ENCODE measurements at regions of chr3 and their contacts with region 1.

Region 1: GRCh38 chr3:34683851-34684250 is 885.4 kb downstream of the PDCD6IP start:
- DNase-seq: peak; percentile 65 to 75
- H3K4me3 ChIP-seq: no peak overlapping the region
- H3K4me3 Mint-ChIP-seq: no peak overlapping the region
- H3K27ac Mint-ChIP-seq: no peak overlapping the region
- H3K4me1 ChIP-seq: peaks cover 8% of the 10 kb centered on the region
- H3K4me1 Mint-ChIP-seq: no peaks in the 10 kb centered on the region
- H3K27me3 ChIP-seq: no peaks in the 10 kb centered on the region
- H3K27me3 Mint-ChIP-seq: no peaks in the 10 kb centered on the region
- CTCF ChIP-seq: peak; percentile 66 to 76

Region 2: DNA sequence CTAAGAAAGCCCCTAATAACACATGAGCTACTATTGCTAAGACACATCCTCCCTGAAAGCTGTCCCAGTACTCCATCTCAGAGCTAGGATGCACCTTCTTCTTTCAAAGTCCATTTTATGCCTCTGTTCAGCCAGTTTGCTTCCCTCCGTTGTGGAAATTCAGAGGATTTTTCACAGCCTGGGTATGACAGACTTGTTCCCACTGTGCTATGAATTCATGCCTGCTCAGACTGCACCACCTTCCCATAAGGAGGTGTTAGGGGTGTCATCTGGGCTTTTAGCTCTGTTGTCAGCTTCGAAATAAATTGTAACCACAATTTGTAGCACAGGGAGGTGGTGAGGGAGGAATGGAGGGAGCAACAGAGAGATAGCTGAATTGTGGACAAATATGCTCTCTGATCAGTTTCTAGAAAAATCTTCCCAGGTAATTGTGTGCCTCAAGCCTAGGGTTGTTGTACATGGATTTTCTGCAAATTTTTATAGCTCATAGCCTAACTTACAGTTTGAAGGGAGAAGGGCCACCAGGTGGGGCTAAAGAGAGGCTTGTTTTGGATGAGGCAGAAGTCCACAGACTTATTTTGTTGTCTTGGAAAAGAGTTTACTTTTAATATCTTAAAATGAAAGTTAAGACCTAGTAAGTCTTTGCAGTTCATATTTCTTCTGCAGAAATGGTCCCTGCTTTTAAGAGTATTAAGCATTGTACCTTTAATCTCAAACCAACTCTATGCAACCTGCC is 423.4 kb before region 1 on chr3:
- CTCF ChIA-PET with region 1: interaction called, 46 read pairs
- POLR2A ChIA-PET with region 1: no interaction called
- intact Hi-C with region 1: loop called (anchors 1 kb)
- DNase-seq: peak; percentile 45 to 63
- H3K4me3 ChIP-seq: no peak overlapping the region
- H3K4me3 Mint-ChIP-seq: no peak overlapping the region
- H3K27ac Mint-ChIP-seq: no peak overlapping the region
- H3K4me1 ChIP-seq: no peaks in the 10 kb centered on the region
- H3K4me1 Mint-ChIP-seq: peaks cover 7% of the 10 kb centered on the region
- H3K27me3 ChIP-seq: no peaks in the 10 kb centered on the region
- H3K27me3 Mint-ChIP-seq: peaks cover 4% of the 10 kb centered on the region
- CTCF ChIP-seq: peak; percentile 51 to 74

Region 3: DNA sequence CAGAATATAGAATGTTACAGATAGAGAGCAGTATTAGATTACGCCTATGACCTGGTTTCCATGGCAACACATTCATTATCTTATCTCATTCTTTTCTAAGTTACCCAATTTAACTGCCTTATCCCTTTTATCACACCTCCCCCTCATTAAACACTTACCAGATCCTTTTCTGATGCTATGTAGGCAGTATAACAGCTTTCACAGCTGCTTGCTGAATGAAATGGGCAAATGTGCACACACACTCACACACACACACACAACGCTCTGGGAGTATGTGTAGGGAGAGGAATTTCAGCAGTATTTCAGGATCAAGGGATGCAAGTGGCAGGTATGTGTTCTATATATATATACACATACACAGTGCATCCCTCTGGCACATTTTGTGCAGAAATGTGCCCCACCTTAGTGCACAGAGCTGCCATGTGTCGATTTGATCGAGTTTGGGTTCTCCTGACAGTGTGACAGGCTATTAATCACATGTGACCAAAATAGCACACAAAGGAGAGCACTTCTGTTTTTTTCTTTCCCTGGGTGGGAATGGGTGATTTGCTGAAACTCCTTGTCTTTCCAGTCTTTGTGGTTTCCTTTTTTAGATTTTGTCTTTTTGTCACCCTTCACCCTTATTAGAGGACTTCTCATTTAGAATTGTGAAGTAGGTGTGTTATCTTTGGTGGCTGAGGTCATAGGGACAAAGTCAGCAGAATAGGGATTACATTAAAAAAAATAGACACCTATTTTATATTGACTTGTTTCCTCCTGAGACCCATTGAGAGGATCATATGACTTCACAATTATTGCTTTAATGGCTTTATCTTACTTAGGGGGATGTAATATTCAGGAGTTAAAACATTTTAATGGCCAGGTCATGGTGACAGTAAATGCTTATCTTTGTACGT is 331.7 kb before region 1 on chr3:
- CTCF ChIA-PET with region 1: no interaction called
- POLR2A ChIA-PET with region 1: no interaction called
- intact Hi-C with region 1: loop called (anchors 10 kb)
- DNase-seq: peak in 1 of 2 experiments; percentile 20
- H3K4me3 ChIP-seq: no peak overlapping the region
- H3K4me3 Mint-ChIP-seq: no peak overlapping the region
- H3K27ac Mint-ChIP-seq: peak overlapping the region; percentile 4
- H3K4me1 ChIP-seq: peaks cover 21% of the 10 kb centered on the region
- H3K4me1 Mint-ChIP-seq: peaks cover 20% of the 10 kb centered on the region
- H3K27me3 ChIP-seq: no peaks in the 10 kb centered on the region
- H3K27me3 Mint-ChIP-seq: no peaks in the 10 kb centered on the region
- CTCF ChIP-seq: no peak

Region 4: DNA sequence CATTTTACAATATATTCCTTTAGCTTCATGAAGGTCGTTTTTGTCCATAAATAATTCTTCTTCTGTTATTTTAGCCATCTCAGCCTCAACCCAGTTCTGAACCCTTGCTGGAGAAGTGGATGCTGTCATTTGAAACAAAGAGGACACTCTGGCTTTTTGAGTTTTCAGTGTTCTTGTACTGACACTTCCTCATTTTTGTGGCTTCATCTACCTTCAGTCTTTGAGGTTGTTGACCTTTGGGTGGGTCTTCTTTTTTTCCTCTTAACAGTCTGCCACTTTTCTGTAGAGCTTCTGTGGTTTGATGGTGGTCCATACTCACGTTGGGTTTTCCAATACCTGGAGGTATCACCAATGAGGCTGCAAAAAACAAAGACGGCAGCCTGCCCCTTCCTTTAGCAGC is 234.5 kb before region 1 on chr3:
- CTCF ChIA-PET with region 1: no interaction called
- POLR2A ChIA-PET with region 1: no interaction called
- intact Hi-C with region 1: no loop called
- DNase-seq: no peak
- H3K4me3 ChIP-seq: no peak overlapping the region
- H3K4me3 Mint-ChIP-seq: no peak overlapping the region
- H3K27ac Mint-ChIP-seq: no peak overlapping the region
- H3K4me1 ChIP-seq: no peaks in the 10 kb centered on the region
- H3K4me1 Mint-ChIP-seq: no peaks in the 10 kb centered on the region
- H3K27me3 ChIP-seq: no peaks in the 10 kb centered on the region
- H3K27me3 Mint-ChIP-seq: no peaks in the 10 kb centered on the region
- CTCF ChIP-seq: no peak

Region 5: GRCh38 chr3:34619990-34620389 is 63.9 kb before region 1 on chr3:
- CTCF ChIA-PET with region 1: interaction called, 11 read pairs
- POLR2A ChIA-PET with region 1: no interaction called
- intact Hi-C with region 1: loop called (anchors 1 kb)
- DNase-seq: peak in 1 of 2 experiments; percentile 10
- H3K4me3 ChIP-seq: no peak overlapping the region
- H3K4me3 Mint-ChIP-seq: no peak overlapping the region
- H3K27ac Mint-ChIP-seq: no peak overlapping the region
- H3K4me1 ChIP-seq: no peaks in the 10 kb centered on the region
- H3K4me1 Mint-ChIP-seq: no peaks in the 10 kb centered on the region
- H3K27me3 ChIP-seq: no peaks in the 10 kb centered on the region
- H3K27me3 Mint-ChIP-seq: no peaks in the 10 kb centered on the region
- CTCF ChIP-seq: no peak